HepG2 (cell line): ENCODE measurements at regions of chr12 and their contacts with region 1.

Region 1: DNA sequence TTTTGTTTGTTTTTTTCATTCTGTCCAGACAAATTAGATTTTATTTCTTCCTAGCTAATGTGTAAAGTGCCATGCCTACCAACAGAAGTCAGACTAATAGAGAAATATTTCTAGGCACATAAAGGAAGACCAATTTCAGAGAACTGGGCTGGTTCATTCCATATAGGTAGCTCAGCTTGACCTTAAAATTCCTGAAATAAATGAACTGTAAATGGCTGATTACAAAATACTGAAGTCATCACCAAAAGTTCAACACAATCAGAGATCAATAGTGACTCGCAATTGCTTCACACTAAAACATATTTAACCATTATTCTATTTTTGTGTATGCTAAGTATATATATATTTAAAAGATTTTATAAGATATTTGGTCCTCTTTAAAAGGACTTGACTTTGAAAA is 34.2 kb downstream of the PTPRB start:
- DNase-seq: no peak
- ATAC-seq: no peak
- H3K4me3 ChIP-seq: no peak overlapping the region
- H3K27ac ChIP-seq: no peak overlapping the region
- H3K4me1 ChIP-seq: no peaks in the 10 kb centered on the region
- H3K27me3 ChIP-seq: no peaks in the 10 kb centered on the region
- CTCF ChIP-seq: no peak
- EP300 ChIP-seq: no peak
- POLR2A ChIP-seq: no peak
- RAD21 ChIP-seq: no peak

Region 2: GRCh38 chr12:70543444-70543843 is 59.6 kb before region 1 on chr12:
- CTCF ChIA-PET with region 1: no interaction called
- POLR2A ChIA-PET with region 1: no interaction called
- in situ Hi-C with region 1: no loop called
- intact Hi-C with region 1: loop called (anchors 2 kb)
- DNase-seq: peak; percentile 41
- ATAC-seq: no peak
- H3K4me3 ChIP-seq: no peak overlapping the region
- H3K27ac ChIP-seq: no peak overlapping the region
- H3K4me1 ChIP-seq: peaks cover 10% of the 10 kb centered on the region
- H3K27me3 ChIP-seq: no peaks in the 10 kb centered on the region
- CTCF ChIP-seq: no peak
- EP300 ChIP-seq: no peak
- POLR2A ChIP-seq: no peak
- RAD21 ChIP-seq: no peak

Region 3: GRCh38 chr12:70686299-70686698 is 83.3 kb after region 1 on chr12:
- CTCF ChIA-PET with region 1: no interaction called
- POLR2A ChIA-PET with region 1: no interaction called
- in situ Hi-C with region 1: no loop called
- intact Hi-C with region 1: no loop called
- DNase-seq: no peak
- ATAC-seq: no peak
- H3K4me3 ChIP-seq: no peak overlapping the region
- H3K27ac ChIP-seq: no peak overlapping the region
- H3K4me1 ChIP-seq: no peaks in the 10 kb centered on the region
- H3K27me3 ChIP-seq: no peaks in the 10 kb centered on the region
- CTCF ChIP-seq: no peak
- EP300 ChIP-seq: no peak
- POLR2A ChIP-seq: no peak
- RAD21 ChIP-seq: no peak